ENCODE measurements at regions of chr1 and their contacts with region 1.

Region 1: DNA sequence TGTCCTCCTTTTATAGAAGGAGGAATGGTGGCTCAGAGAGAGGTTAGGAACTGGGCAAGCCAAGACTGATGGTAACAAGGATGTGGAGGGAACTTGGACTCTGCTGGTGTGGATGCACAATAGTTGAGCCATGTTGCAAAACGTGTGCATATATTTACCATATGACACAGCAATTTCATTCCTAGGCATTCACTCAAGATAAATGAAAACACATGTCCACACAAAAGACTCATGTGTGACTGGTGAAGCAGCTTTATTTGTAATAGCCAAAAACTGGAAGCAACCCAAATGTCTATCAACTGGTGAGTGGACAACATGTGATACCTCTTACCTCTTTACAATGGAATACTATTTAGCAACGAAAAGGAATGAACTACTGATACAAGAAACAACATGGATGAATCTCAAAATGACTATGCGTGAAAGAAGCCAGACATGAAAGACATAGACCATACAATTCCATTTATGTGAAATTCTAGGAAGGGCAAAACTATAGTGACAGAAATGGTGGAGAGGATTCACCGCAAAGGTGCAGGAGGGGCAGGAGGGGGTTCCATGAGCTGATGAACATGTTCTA is 36.2 kb downstream of the CAMK2N1 start:
- DNase-seq: no peak
- H3K4me3 ChIP-seq: no peak overlapping the region
- H3K27ac ChIP-seq: no peak overlapping the region
- H3K4me1 ChIP-seq: no peaks in the 10 kb centered on the region
- H3K27me3 ChIP-seq: peaks cover 14% of the 10 kb centered on the region
- CTCF ChIP-seq: no peak
- EP300 ChIP-seq: no peak
- POLR2A ChIP-seq: no peak

Region 2: DNA sequence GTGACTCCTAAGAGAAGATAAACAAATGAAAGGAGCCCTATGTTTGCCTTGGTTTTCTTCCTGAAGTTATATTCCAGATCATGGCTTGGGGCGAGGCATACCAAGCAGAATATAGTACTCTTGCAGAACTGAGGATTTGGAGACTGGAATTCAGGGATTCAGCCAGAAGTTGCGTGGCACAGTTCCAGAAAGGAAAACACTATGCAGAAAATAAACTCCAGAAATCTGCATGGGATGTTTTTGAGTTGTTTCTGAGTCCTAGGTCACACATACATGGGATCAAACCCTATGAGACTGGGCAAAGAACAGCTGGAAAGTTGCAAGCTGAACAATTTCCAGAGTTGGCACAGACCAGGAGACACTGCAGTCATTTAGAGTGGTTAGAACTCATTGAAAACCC is 1450.5 kb before region 1 on chr1:
- in situ Hi-C with region 1: no loop called
- intact Hi-C with region 1: loop called (anchors 10 kb)
- DNase-seq: no peak
- H3K4me3 ChIP-seq: no peak overlapping the region
- H3K27ac ChIP-seq: peak overlapping the region in 3 of 4 donors; percentile 5 to 17 (median 16)
- H3K4me1 ChIP-seq: peaks cover 0 to 10% (median 7%) of the 10 kb centered on the region in 4 donors
- H3K27me3 ChIP-seq: no peaks in the 10 kb centered on the region
- CTCF ChIP-seq: no peak
- EP300 ChIP-seq: no peak
- POLR2A ChIP-seq: no peak

Measured in transverse colon (tissue), 4 donors.